WTC11 (cell line): ENCODE measurements at regions of chr15 and their contacts with region 1.

Region 1: GRCh38 chr15:74768771-74769342 is 13.0 kb upstream of the CSK start:
- DNase-seq: peak; percentile 81
- ATAC-seq: peak; percentile 58
- H3K4me3 Mint-ChIP-seq: peak overlapping the region; percentile 58
- H3K27ac Mint-ChIP-seq: no peak overlapping the region
- H3K4me1 Mint-ChIP-seq: peaks cover 23% of the 10 kb centered on the region
- H3K27me3 Mint-ChIP-seq: peaks cover 21% of the 10 kb centered on the region
- CTCF ChIP-seq: peak; percentile 90

Region 2: GRCh38 chr15:74620636-74621545 is 148.0 kb before region 1 on chr15:
- CTCF ChIA-PET with region 1: interaction called, 78 read pairs
- POLR2A ChIA-PET with region 1: interaction called, 3 read pairs
- DNase-seq: peak; percentile 83
- ATAC-seq: peak; percentile 88
- H3K4me3 Mint-ChIP-seq: no peak overlapping the region
- H3K27ac Mint-ChIP-seq: peak overlapping the region; percentile 70
- H3K4me1 Mint-ChIP-seq: peaks cover 22% of the 10 kb centered on the region
- H3K27me3 Mint-ChIP-seq: no peaks in the 10 kb centered on the region
- CTCF ChIP-seq: peak; percentile 80

Region 3: GRCh38 chr15:74664028-74664616 is 104.7 kb before region 1 on chr15:
- CTCF ChIA-PET with region 1: interaction called, 24 read pairs
- POLR2A ChIA-PET with region 1: no interaction called
- DNase-seq: no peak
- ATAC-seq: no peak
- H3K4me3 Mint-ChIP-seq: no peak overlapping the region
- H3K27ac Mint-ChIP-seq: peak overlapping the region; percentile 57
- H3K4me1 Mint-ChIP-seq: peaks cover 4% of the 10 kb centered on the region; the same call in 1 of the 2 replicates
- H3K27me3 Mint-ChIP-seq: no peaks in the 10 kb centered on the region
- CTCF ChIP-seq: no peak

Region 4: DNA sequence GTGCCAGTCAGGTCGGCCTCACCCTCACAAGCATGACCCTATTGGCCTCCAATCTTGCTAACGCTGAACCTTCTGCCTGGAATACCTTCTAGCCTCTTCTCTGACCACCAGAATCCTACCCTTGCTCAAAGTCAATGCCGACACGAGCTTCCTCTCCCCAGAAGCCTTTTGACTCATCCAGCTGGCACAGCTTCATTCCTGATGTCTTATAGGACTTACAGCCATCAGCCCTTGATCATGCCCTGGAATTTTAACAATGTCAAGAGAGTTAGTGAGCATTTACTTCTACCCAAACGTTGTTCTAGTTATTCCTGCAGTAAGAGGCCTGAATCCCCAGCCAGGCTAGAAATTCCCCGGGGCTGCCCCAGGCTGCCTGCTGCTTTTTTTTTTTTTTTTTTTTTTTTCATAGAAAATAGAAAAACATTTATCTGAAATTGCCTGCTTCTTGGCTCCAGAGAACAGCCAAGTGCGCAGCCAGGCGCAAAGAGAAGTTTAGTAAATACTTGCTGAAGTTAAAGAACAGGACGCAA is 16.3 kb before region 1 on chr15:
- CTCF ChIA-PET with region 1: interaction called, 131 read pairs
- POLR2A ChIA-PET with region 1: no interaction called
- DNase-seq: no peak
- ATAC-seq: no peak
- H3K4me3 Mint-ChIP-seq: no peak overlapping the region
- H3K27ac Mint-ChIP-seq: no peak overlapping the region
- H3K4me1 Mint-ChIP-seq: peaks cover 7% of the 10 kb centered on the region; the same call in 1 of the 2 replicates
- H3K27me3 Mint-ChIP-seq: peaks cover 1% of the 10 kb centered on the region; the same call in 1 of the 2 replicates
- CTCF ChIP-seq: no peak

Region 5: GRCh38 chr15:74799856-74800547 is 31.1 kb after region 1 on chr15:
- CTCF ChIA-PET with region 1: interaction called, 101 read pairs
- POLR2A ChIA-PET with region 1: no interaction called
- DNase-seq: peak; percentile 90
- ATAC-seq: peak; percentile 98
- H3K4me3 Mint-ChIP-seq: no peak overlapping the region
- H3K27ac Mint-ChIP-seq: peak overlapping the region; percentile 36; the same call in 1 of the 2 replicates
- H3K4me1 Mint-ChIP-seq: 0 out of 2 replicates have a peak, but pooled peaks cover 2% of the 10 kb centered on the region
- H3K27me3 Mint-ChIP-seq: no peaks in the 10 kb centered on the region
- CTCF ChIP-seq: peak; percentile 98

Region 6: GRCh38 chr15:74826364-74826819 is 57.5 kb after region 1 on chr15 and contains the start of gene CPLX3:
- CTCF ChIA-PET with region 1: interaction called, 24 read pairs
- POLR2A ChIA-PET with region 1: no interaction called
- DNase-seq: peak; percentile 58
- ATAC-seq: peak; percentile 55
- H3K4me3 Mint-ChIP-seq: peak within 1 kb of the TSS; percentile 47
- H3K27ac Mint-ChIP-seq: no peak within 1 kb of the TSS
- H3K4me1 Mint-ChIP-seq: peaks cover 11% of the 10 kb centered on the region
- H3K27me3 Mint-ChIP-seq: peaks cover 57% of the 10 kb centered on the region
- CTCF ChIP-seq: no peak
- total RNA-seq, gene CPLX3: 0.09 to 0.21 TPM (median 0.09 TPM) in 3 replicates

Region 7: GRCh38 chr15:74950078-74951000 is 181.5 kb after region 1 on chr15:
- CTCF ChIA-PET with region 1: interaction called, 26 read pairs
- POLR2A ChIA-PET with region 1: no interaction called
- DNase-seq: peak; percentile 94
- ATAC-seq: peak; percentile 79
- H3K4me3 Mint-ChIP-seq: no peak overlapping the region
- H3K27ac Mint-ChIP-seq: peak overlapping the region; percentile 36
- H3K4me1 Mint-ChIP-seq: peaks cover 37% of the 10 kb centered on the region
- H3K27me3 Mint-ChIP-seq: peaks cover 6% of the 10 kb centered on the region
- CTCF ChIP-seq: peak; percentile 95